ENCODE measurements at regions of chr11 and their contacts with region 1.

Region 1: DNA sequence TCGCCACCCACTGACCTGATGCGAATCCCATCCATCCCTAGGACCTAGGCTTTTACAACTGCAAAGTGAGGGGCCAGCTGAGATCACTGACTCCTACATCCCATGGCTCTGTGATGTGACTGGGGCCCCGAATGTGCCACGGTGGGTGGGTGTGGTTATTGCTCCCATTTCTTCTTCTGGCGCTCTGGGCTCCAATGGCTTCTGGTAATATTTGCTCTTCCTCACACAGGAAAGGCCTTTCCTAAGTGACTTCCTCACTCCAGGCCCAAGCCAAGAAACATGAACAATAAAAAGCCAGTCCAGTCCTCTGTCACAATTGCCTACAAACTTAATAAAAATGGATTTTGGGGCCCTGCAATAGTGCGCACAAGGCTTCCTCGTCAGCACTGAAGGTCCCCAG is 78.1 kb downstream of the GALNT18 start:
- DNase-seq: peak in 1 of 2 donors; percentile 55
- ATAC-seq: peak; percentile 40 to 86 (median 70)
- H3K4me3 ChIP-seq: no peak overlapping the region
- H3K27ac ChIP-seq: peak overlapping the region; percentile 33 to 95 (median 75)
- H3K4me1 ChIP-seq: peaks cover 13 to 100% (median 44%) of the 10 kb centered on the region in 9 donors
- H3K27me3 ChIP-seq: no peaks in the 10 kb centered on the region
- CTCF ChIP-seq: no peak

Region 2: GRCh38 chr11:11117730-11118129 is 425.9 kb before region 1 on chr11:
- intact Hi-C with region 1: no loop called
- DNase-seq: no peak
- ATAC-seq: no peak
- H3K4me3 ChIP-seq: no peak overlapping the region
- H3K27ac ChIP-seq: no peak overlapping the region
- H3K4me1 ChIP-seq: no peaks in the 10 kb centered on the region
- H3K27me3 ChIP-seq: no peaks in the 10 kb centered on the region
- CTCF ChIP-seq: no peak

Region 3: DNA sequence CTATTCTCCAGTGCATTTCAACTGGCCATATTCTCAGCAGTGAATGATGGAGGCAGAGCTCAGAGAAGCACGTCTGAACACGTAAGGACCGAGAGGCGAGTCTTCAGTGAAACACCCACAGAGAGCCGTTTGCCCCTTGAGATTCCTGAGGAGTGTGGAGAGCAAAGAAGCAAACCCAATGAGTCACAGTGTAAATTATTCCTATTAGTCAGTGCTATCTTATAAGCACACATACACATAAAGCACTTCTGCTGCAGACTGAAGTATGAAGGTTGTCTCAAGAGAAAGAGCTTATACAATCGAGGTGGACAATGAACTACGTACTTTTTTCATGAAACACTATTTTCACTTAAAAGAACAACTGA is 40.8 kb after region 1 on chr11:
- intact Hi-C with region 1: loop called in 3 of 10 experiments (anchors 5 kb)
- DNase-seq: no peak
- ATAC-seq: no peak
- H3K4me3 ChIP-seq: no peak overlapping the region
- H3K27ac ChIP-seq: peak overlapping the region in 3 of 10 donors; percentile 78 to 90 (median 79)
- H3K4me1 ChIP-seq: peaks cover 21 to 98% (median 58%) of the 10 kb centered on the region in 9 donors
- H3K27me3 ChIP-seq: no peaks in the 10 kb centered on the region
- CTCF ChIP-seq: no peak

Region 4: GRCh38 chr11:11604370-11604980 is 60.8 kb after region 1 on chr11:
- intact Hi-C with region 1: no loop called
- DNase-seq: no peak
- ATAC-seq: no peak
- H3K4me3 ChIP-seq: no peak overlapping the region
- H3K27ac ChIP-seq: no peak overlapping the region
- H3K4me1 ChIP-seq: peaks cover 0 to 31% (median 11%) of the 10 kb centered on the region in 9 donors
- H3K27me3 ChIP-seq: no peaks in the 10 kb centered on the region
- CTCF ChIP-seq: no peak

Region 5: GRCh38 chr11:12653725-12654124 is 1110.1 kb after region 1 on chr11:
- intact Hi-C with region 1: no loop called
- DNase-seq: no peak
- ATAC-seq: no peak
- H3K4me3 ChIP-seq: no peak overlapping the region
- H3K27ac ChIP-seq: no peak overlapping the region
- H3K4me1 ChIP-seq: no peaks in the 10 kb centered on the region
- H3K27me3 ChIP-seq: no peaks in the 10 kb centered on the region
- CTCF ChIP-seq: no peak